PC-9 (cell line): ENCODE measurements at regions of chr1 and their contacts with region 1.

Region 1: GRCh38 chr1:150259758-150260669 is 2.4 kb downstream of the CA14 start:
- DNase-seq: peak; percentile 85 to 95
- H3K4me3 ChIP-seq: peak overlapping the region; percentile 44; the same call in 1 of the 2 replicates
- H3K27ac ChIP-seq: peak overlapping the region; percentile 71
- H3K4me1 ChIP-seq: peaks cover 68% of the 10 kb centered on the region
- H3K27me3 ChIP-seq: no peaks in the 10 kb centered on the region
- CTCF ChIP-seq: no peak

Region 2: GRCh38 chr1:150281837-150282653 is 22.0 kb after region 1 on chr1 and contains the start of gene CIART:
- CTCF ChIA-PET with region 1: interaction called, 23 read pairs
- POLR2A ChIA-PET with region 1: interaction called, 16 read pairs
- intact Hi-C with region 1: loop called (anchors 1 kb)
- DNase-seq: peak; percentile 91 to 92
- H3K4me3 ChIP-seq: peak within 1 kb of the TSS; percentile 52
- H3K27ac ChIP-seq: peak within 1 kb of the TSS; percentile 51
- H3K4me1 ChIP-seq: peaks cover 14% of the 10 kb centered on the region; the same call in 1 of the 2 replicates
- H3K27me3 ChIP-seq: no peaks in the 10 kb centered on the region
- CTCF ChIP-seq: no peak
- total RNA-seq, gene CIART: 11.0 and 16.6 TPM in 2 replicates

Region 3: GRCh38 chr1:150363426-150364230 is 103.6 kb after region 1 on chr1 and contains the start of gene RPRD2:
- CTCF ChIA-PET with region 1: no interaction called
- POLR2A ChIA-PET with region 1: interaction called, 5 read pairs
- intact Hi-C with region 1: loop called (anchors 10 kb)
- DNase-seq: peak; percentile 98 to 99
- H3K4me3 ChIP-seq: peak within 1 kb of the TSS; percentile 73
- H3K27ac ChIP-seq: peak within 1 kb of the TSS; percentile 94
- H3K4me1 ChIP-seq: peaks cover 15% of the 10 kb centered on the region
- H3K27me3 ChIP-seq: no peaks in the 10 kb centered on the region
- CTCF ChIP-seq: 0 out of 2 replicates have a peak, but pooled peaks have one; percentile 12
- total RNA-seq, gene RPRD2: 24.3 and 36.2 TPM in 2 replicates

Region 4: DNA sequence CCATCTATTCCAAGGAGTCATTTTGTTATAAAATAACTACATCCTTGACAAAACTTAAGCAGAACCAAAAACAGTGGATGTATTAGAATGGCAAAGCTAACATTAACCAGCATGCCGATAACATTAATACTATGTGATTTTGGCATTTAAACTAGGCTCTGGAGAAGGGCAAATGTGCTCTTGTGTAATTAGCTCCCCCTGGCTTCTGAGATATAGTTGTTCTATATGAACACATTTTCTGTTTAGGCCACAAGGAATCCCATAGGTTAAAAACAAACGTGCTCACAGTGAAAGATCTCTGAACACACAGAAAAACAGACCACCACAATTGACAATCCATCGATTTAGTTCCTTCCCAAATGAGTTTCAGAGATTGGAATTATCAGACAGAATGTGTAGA is 169.8 kb after region 1 on chr1:
- CTCF ChIA-PET with region 1: no interaction called
- POLR2A ChIA-PET with region 1: no interaction called
- intact Hi-C with region 1: no loop called
- DNase-seq: no peak
- H3K4me3 ChIP-seq: no peak overlapping the region
- H3K27ac ChIP-seq: no peak overlapping the region
- H3K4me1 ChIP-seq: no peaks in the 10 kb centered on the region
- H3K27me3 ChIP-seq: no peaks in the 10 kb centered on the region
- CTCF ChIP-seq: no peak; the same call in 1 of the 2 replicates

Region 5: DNA sequence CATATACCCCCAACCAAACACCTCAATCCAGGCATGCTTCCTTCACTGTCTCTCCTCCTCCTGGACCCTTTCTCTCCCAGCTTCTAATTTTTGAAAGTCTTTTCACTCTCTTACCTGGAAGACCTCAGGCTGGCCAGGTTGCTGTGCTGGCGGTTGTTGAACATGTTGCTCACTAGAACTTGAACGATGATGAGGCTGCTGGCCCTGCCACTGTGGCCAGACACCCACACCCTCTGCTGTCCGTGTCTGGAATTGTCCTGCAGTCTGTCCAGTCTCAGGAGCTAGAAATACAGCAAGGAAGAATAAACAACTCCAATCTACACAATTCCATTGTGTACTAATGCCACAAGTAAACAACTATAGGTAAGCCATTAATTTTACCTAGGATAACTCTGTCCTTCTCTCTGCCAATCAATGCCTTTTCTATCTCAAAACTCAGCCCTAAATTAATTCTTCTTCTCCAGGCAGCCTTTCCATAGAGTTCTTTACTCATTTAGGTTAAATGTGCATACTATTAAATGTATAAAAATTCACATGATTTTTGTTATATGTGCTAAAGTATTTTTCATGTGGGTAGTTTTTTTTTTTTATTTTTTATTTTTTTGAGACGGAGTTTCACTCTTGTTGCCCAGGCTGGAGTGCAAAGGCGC is 553.2 kb after region 1 on chr1:
- CTCF ChIA-PET with region 1: no interaction called
- POLR2A ChIA-PET with region 1: no interaction called
- intact Hi-C with region 1: loop called (anchors 5 kb)
- DNase-seq: peak; percentile 38 to 75
- H3K4me3 ChIP-seq: no peak overlapping the region
- H3K27ac ChIP-seq: no peak overlapping the region
- H3K4me1 ChIP-seq: no peaks in the 10 kb centered on the region
- H3K27me3 ChIP-seq: no peaks in the 10 kb centered on the region
- CTCF ChIP-seq: peak; percentile 85

Region 6: DNA sequence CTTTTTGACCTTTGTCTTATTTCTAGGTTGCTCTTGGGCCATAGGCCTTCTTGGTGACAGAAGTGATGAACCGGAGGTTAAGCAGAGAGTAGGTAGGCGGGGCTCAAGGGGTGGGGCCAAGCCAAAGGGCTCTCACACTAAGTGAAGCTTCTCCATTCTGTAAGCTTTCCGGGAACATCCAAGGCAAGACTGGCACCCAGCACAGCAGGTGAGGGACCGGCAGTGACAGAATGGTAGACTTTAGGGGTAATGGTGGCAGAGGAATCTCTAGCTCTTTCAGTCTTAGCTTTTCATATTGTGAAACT is 896.5 kb after region 1 on chr1 and contains the start of gene TNFAIP8L2:
- CTCF ChIA-PET with region 1: no interaction called
- POLR2A ChIA-PET with region 1: no interaction called
- intact Hi-C with region 1: loop called (anchors 5 kb)
- DNase-seq: no peak
- H3K4me3 ChIP-seq: no peak within 1 kb of the TSS
- H3K27ac ChIP-seq: no peak within 1 kb of the TSS
- H3K4me1 ChIP-seq: no peaks in the 10 kb centered on the region
- H3K27me3 ChIP-seq: no peaks in the 10 kb centered on the region
- CTCF ChIP-seq: no peak
- total RNA-seq, gene TNFAIP8L2: not detected in 2 replicates